MCF 10A (cell line): ENCODE measurements at regions of chr5 and their contacts with region 1.

Region 1: DNA sequence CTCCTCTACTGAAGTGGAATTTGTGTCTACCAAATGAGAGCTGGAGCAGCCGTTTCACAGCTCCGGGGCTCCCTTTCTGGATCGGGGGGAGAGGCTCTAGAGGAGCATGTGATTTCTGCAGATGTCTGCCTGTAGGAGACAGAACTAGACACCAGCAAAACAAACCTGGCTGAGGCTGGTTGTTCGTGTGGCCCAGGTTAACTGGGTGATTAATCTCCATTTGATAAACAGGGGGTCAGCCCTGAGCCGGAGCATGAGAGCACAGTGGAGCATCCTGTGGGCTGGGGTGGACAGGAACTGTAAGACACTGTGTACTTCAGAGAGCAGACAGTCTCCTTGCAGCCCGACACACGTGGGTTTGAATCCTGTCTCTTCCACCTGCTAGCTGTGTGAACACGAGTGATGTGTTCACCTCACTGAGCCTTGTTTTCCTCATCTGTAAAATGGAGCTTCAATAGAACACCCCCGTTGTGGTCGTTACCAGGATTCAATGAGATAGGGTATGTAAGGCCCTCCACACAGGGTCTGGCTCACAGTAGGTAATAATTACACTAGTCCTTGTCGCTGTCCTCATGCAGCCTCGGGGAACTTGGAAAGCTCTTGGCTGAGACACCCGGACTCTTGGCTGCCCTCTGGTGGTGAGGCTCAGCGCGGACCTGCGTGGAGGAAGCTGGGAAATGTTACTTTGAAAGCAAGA is 12.9 kb downstream of the CXCL14 start:
- DNase-seq: peak; percentile 76
- H3K4me3 Mint-ChIP-seq: no peak overlapping the region
- H3K27ac Mint-ChIP-seq: no peak overlapping the region
- H3K4me1 Mint-ChIP-seq: peaks cover 11% of the 10 kb centered on the region
- H3K27me3 Mint-ChIP-seq: peaks cover 16% of the 10 kb centered on the region
- CTCF ChIP-seq: peak; percentile 94

Region 2: GRCh38 chr5:135443161-135443960 is 122.5 kb before region 1 on chr5:
- CTCF ChIA-PET with region 1: interaction called, 10 read pairs
- POLR2A ChIA-PET with region 1: no interaction called
- intact Hi-C with region 1: no loop called
- DNase-seq: no peak
- H3K4me3 Mint-ChIP-seq: no peak overlapping the region
- H3K27ac Mint-ChIP-seq: no peak overlapping the region
- H3K4me1 Mint-ChIP-seq: peaks cover 8% of the 10 kb centered on the region
- H3K27me3 Mint-ChIP-seq: no peaks in the 10 kb centered on the region
- CTCF ChIP-seq: no peak

Region 3: DNA sequence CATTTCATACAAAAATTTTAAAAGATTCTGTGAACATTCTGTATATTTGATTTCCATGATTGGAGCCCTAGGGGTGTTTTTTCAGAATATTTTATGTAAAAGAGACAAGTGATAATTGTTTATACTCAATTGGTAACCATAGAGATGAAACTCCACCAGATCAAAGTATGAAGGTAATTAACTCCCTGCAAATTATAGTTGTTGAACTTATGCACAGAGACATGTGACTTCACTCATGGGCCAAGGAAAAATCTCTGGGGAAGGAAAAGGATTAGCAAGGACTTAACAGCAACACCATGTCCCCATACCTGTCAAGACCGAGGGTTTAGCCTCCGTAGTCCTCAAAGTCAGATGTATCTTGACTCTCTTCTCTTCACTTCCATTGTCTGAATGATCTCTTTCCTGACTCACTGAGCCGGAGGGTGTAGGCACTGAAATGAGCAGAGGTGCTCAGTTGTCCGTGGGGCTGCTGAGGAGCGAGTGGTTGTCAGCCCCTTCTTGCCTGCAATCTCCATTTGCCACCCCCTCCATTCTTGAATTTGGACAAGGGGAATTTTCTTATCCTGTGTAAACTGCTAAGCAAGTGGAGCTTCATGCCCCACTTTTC is 30.4 kb after region 1 on chr5:
- CTCF ChIA-PET with region 1: interaction called, 391 read pairs
- POLR2A ChIA-PET with region 1: no interaction called
- intact Hi-C with region 1: no loop called
- DNase-seq: no peak
- H3K4me3 Mint-ChIP-seq: no peak overlapping the region
- H3K27ac Mint-ChIP-seq: no peak overlapping the region
- H3K4me1 Mint-ChIP-seq: no peaks in the 10 kb centered on the region
- H3K27me3 Mint-ChIP-seq: peaks cover 51% of the 10 kb centered on the region
- CTCF ChIP-seq: no peak

Region 4: GRCh38 chr5:135660826-135661575 is 95.1 kb after region 1 on chr5:
- CTCF ChIA-PET with region 1: interaction called, 19 read pairs
- POLR2A ChIA-PET with region 1: interaction called, 6 read pairs
- intact Hi-C with region 1: no loop called
- DNase-seq: no peak
- H3K4me3 Mint-ChIP-seq: no peak overlapping the region
- H3K27ac Mint-ChIP-seq: no peak overlapping the region
- H3K4me1 Mint-ChIP-seq: no peaks in the 10 kb centered on the region
- H3K27me3 Mint-ChIP-seq: no peaks in the 10 kb centered on the region
- CTCF ChIP-seq: no peak

Region 5: GRCh38 chr5:135705141-135705631 is 139.3 kb after region 1 on chr5:
- CTCF ChIA-PET with region 1: interaction called, 19 read pairs
- POLR2A ChIA-PET with region 1: no interaction called
- intact Hi-C with region 1: no loop called
- DNase-seq: peak; percentile 63
- H3K4me3 Mint-ChIP-seq: no peak overlapping the region
- H3K27ac Mint-ChIP-seq: peak overlapping the region; percentile 40
- H3K4me1 Mint-ChIP-seq: peaks cover 9% of the 10 kb centered on the region
- H3K27me3 Mint-ChIP-seq: no peaks in the 10 kb centered on the region
- CTCF ChIP-seq: no peak

Region 6: DNA sequence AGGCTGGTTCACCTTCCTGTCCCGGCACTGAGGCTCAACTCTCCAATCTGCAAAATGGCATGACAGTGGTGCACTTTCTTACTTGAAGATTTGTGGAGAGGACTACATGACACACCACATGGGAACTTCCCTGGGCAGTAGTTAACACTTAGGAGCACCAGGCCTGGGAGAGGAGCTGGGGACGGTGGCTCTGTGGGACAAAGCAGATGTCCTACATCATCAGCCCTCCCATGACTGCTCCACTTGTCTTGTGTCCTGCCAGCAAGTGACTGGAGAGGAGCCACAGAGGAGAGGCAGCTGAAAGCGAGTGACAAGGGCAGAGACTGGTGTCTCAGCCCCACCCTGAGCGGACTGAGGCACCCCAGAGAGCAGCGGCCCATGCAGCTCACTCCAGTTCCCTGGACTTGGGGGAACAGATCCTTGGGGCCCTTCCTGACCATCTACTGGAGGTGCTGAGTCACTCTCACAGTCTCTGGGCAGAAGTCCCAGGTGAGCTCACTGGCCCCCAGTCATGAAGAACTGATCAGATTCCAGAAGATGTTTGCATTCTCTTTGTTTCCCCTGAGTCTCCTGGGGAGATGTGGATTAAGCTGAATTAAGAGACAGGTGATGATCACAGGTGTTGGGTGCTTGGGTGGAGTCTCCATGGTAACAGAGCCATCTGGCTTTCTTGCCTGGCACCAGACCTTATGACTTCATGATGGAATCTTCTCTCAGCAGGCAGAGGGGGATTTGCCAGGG is 255.4 kb after region 1 on chr5:
- CTCF ChIA-PET with region 1: interaction called, 482 read pairs
- POLR2A ChIA-PET with region 1: no interaction called
- intact Hi-C with region 1: no loop called
- DNase-seq: peak; percentile 49
- H3K4me3 Mint-ChIP-seq: no peak overlapping the region
- H3K27ac Mint-ChIP-seq: no peak overlapping the region
- H3K4me1 Mint-ChIP-seq: no peaks in the 10 kb centered on the region
- H3K27me3 Mint-ChIP-seq: peaks cover 16% of the 10 kb centered on the region
- CTCF ChIP-seq: no peak